ENCODE measurements at regions of chr2 and their contacts with region 1.

Region 1: GRCh38 chr2:201414099-201415023 is 36.9 kb downstream of the TRAK2 start:
- DNase-seq: no peak
- H3K4me3 ChIP-seq: no peak overlapping the region
- H3K27ac ChIP-seq: no peak overlapping the region
- H3K4me1 ChIP-seq: peaks cover 6% of the 10 kb centered on the region
- H3K27me3 ChIP-seq: no peaks in the 10 kb centered on the region
- CTCF ChIP-seq: no peak
- POLR2A ChIP-seq: no peak

Region 2: DNA sequence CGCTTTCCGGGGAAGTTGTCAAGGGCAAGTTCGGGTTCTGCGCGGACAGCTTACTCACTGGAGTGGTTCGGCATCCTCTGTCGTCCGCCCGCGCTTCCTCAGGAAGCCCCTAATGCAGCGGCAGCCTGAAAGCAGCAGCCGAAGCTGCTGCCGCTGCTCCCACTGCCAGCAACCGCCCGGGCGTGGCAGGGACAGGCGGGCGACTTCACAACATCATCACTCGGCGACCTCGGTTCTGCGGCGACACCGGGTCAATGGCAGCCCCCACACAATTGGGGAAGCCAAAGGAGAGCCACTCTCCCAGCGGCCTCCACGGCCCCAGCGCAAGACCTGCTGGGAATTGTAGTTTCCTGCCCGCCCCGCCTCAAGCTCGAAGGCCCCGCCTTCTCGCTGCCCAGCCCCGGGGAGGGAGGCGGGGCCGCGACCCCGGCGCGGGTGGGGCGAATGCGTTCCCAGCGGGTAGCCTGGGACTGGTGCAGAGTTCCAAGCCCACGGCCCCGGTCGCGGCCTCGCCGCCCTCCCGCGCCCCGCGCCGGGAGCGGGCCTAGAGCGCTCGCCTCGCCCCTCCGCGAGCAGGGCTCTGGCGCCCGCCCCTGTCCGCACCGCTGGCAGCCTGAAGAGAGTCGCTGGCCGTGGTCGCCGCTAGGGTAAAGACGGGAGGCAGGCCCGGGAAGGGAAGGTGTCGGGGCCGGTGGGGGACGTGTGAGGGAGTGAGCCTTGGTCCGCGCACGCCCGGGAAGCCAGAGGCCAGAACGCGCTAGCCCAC is 37.1 kb after region 1 on chr2 and contains the starts of genes STRADB and TRAK2:
- intact Hi-C with region 1: loop called (anchors 5 kb)
- DNase-seq: peak; percentile 94
- H3K4me3 ChIP-seq: peak within 1 kb of the TSS; percentile 93 to 96
- H3K27ac ChIP-seq: peak within 1 kb of the TSS; percentile 90 to 97
- H3K4me1 ChIP-seq: no peaks in the 10 kb centered on the region
- H3K27me3 ChIP-seq: no peaks in the 10 kb centered on the region
- CTCF ChIP-seq: peak in 3 of 4 experiments; percentile 7 to 55 (median 47)
- POLR2A ChIP-seq: peak; percentile 82
- total RNA-seq, gene STRADB: 20.4 to 29.8 TPM
- total RNA-seq, gene TRAK2: 16.9 to 18.9 TPM

Region 3: GRCh38 chr2:201466050-201466675 is 51.8 kb after region 1 on chr2:
- intact Hi-C with region 1: loop called (anchors 5 kb)
- DNase-seq: peak; percentile 66
- H3K4me3 ChIP-seq: no peak overlapping the region
- H3K27ac ChIP-seq: peak overlapping the region; percentile 83 to 88
- H3K4me1 ChIP-seq: peaks cover 12% of the 10 kb centered on the region
- H3K27me3 ChIP-seq: no peaks in the 10 kb centered on the region
- CTCF ChIP-seq: peak in 1 of 4 experiments; percentile 6
- POLR2A ChIP-seq: no peak